Left cardiac atrium (tissue), 4 donors: ENCODE measurements at regions of chr18 and their contacts with region 1.

Region 1: DNA sequence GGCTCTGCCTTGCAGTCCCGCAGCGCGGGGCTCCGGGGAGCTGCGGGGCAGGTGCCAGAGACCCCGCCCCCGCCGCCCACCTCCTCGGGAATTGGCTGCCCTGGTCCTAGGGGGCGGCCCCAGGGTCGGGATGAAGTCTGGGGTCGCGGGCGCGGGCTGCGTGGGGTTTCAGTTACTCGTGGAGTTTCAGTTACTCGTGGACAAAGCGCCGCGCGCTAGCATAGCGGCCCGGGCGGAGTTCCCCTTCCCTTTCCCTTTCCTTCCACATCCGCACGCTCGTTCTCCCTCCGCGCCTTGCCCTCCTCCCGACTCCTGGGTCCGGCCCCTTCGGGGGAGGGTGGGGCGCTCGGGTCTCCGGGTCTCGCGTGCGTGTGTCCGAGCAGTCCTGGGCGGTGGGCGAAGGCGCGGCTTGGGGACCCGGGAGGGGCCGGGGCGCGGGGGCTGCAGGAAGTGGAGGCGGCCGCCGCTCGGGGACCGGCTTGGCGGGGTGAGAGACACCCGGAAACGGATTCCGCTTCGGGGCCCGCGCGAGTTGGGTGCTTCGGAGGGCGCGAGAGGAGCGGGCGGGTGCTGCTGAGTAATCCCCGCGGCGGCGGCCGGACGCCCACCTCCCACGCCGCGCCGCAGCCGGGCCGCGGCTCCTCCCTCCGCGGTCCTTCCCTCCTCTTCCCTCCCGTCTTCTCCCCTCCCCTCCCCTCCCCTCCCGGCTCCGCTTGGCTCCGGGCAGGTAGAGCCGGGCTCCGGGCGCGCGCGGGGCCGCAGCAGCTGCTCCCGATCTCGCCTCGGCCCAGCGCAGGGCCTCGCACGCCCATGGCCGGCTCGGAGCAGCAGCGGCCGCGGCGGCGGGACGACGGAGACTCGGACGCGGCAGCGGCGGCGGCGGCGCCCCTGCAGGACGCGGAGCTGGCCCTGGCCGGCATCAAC is at the start of gene TTC39C:
- DNase-seq: peak; percentile 81
- ATAC-seq: peak; percentile 84 to 94
- total RNA-seq, gene TTC39C: 7.6 to 8.9 TPM

Region 2: DNA sequence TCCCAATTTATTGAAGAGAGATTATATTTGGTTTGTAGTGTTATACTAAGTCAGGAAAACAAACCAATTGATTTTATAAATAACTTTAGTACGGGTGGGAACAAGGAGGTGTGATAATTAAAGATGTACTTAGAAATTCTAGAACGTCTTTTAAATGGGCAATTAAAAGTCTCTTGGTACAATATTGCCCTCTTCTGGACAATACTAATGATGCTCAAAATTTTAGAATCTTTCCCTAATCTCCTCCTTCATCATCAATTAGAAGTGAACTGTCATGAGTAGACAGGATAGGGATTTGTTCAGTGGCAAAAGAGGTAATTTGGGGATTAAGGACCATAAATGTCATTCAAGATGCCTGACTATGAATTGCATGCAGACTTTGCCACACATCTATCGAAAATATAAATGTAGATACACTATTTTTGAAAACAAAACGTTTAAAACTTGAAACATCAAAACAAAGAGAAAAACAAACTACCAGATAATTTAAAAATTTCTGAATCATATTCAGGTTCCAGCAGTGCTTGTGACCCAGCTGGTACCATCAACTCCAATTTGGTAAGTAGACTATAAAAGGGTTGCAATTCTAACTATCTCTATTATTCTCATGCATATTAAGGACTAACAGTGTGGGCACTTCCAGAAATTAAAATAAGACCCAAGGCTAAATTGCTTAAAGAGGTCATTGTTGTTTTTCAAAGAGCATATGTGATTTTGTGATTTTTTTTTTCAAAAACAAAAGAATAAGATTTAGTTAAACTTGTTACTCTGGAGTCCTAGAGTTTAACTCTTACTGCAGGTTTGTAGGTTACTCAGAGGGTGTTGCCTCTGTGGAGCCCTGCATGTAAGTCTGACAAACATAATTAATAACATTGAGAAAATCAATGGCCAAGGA is 201.5 kb before region 1 on chr18:
- intact Hi-C with region 1: no loop called
- DNase-seq: no peak
- ATAC-seq: no peak

Region 3: DNA sequence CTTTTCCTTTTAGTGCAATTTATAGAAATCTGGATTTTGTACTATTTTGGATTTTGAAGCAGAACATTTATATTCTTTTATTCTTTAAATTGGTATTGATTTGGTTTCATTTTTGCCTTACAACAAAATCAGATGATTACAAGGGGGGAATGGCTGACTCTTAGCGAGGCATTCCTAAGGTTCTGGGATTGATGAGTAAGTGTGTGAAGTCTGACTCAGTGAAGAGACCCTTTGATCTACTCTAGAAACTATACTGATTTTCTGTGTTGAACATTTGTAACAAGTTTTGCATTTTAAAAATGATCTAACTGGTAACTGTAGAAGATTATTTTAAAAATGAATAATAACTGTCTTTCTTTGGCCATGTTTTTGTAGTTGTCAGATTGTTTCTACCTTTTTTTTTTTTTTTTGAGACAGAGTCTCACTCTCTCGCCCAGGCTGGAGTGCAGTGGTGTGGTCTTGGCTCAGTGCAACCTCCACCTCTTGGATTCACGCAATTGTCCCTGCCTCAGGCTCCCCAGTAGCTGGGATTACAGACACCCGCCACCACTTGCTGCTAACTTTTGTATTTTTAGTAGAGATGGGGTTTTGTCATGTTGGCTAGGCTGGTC is 48.9 kb after region 1 on chr18:
- intact Hi-C with region 1: loop called in 1 of 2 experiments (anchors 10 kb)
- DNase-seq: no peak
- ATAC-seq: no peak

Region 4: DNA sequence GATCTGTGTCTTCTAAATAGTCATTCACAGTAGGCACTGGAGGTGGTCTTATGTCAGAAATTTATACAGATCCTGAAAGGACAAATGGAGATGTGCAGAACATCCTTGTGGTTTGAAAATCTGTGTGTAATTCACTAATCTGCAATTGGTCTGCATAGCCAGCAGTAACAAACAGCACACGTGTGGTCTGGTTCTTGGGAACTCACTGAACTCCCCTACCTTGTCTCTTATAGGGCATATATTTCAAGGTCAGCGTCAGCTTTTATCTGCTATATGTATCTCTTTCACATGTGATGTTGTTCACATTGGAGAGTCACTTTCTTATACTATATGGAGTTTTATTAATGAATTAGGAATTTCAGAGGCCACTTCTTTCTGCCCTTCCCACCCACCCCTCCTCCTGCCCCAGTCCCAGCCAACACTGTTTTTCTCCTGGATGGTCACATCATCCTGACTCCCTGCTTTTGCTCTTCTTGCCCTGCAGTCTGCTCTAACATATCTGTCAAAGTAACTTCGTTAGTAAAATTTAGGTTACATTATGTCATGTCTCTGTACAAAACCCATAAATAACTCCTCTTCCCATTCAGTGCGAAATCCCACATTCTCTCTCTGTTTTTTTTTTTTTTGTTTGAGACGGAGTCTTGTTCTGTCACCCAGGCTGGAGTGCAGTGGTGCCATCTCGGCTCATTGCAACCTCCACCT is 89.1 kb after region 1 on chr18:
- intact Hi-C with region 1: loop called in 1 of 2 experiments (anchors 10 kb)
- DNase-seq: no peak
- ATAC-seq: peak in 1 of 2 donors; percentile 55